ENCODE measurements at regions of chr2 and their contacts with region 1.

Region 1: DNA sequence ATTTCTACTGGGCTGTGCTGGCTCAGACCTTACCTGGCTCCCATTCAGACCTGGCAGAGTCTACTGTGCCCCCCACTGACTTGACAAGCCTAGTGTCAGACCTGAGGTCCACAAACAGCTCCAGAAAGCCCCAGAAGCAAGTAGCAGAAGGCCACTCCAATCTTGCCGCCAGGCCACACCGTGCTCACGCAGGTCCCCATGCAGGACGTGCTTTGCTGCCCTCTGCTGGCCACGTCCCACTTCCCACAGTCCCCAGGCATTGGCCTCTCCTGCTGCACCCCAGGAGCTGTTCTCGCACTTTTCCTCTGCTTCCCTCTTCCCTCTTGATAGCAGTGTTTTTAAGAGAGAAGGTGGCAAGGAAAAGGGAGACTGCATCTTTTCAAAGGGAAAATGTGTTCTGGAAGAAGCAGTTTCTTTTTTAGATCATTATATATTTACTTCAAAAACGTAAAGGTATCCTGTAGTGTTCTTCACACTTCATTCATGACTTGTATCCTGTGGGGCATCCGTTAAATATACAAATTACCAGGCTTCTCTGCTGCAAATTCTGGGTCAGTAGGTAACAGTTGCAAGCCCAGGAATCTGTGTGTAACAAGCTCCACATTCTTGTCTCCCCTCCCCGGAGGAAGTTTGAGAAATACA is 81.4 kb upstream of the PAPOLG start:
- DNase-seq: peak; percentile 81
- H3K27ac ChIP-seq: no peak overlapping the region
- CTCF ChIP-seq: peak; percentile 96

Region 2: GRCh38 chr2:60560734-60561644 is 113.7 kb before region 1 on chr2:
- CTCF ChIA-PET with region 1: interaction called, 14 read pairs
- POLR2A ChIA-PET with region 1: no interaction called
- DNase-seq: peak; percentile 20
- H3K27ac ChIP-seq: no peak overlapping the region
- CTCF ChIP-seq: peak; percentile 34

Region 3: DNA sequence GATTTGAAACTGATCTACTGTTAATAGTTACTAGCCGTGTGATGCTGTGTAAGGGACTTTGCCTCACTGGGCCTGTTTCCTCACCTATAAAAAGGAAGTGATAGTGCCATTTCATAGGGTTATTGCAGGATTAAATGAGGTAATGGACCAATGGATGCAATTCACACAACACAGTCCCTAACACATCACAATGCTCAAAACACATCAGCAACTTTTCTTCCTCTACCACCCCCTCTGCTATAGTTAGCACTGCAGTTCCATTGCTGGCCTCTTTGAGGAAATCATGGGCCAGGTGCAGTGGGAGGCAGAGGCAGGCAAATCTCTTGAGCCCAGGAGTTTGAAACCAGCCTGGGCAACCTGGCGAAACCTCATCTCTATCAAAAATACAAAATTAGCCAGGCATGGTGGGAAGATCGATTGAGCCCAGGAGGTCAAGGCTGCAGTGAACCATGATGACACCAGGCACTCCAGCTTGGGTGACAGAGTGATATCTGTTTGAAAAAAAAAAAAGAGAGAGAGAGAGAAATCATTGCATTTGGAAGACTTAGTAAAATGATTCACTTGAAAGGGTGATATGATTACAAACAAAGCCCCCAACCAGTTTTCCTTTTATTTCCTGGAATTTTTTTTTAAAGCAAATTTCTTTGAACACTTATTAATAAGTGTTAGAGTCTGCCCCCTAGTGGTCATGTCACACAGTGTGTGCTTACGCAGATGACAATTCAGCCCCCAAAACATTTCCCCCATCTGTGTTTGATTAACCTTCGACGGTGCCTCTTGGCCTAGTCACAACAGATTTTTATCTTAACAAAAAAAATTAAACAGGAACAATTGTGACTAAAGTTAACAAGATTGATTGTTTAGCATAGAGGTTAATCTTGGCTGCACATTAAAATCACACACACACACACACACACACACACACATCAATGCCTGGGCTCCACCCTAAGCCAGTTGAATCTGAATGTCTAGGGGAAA is 32.5 kb before region 1 on chr2:
- CTCF ChIA-PET with region 1: interaction called, 10 read pairs
- POLR2A ChIA-PET with region 1: no interaction called
- DNase-seq: peak; percentile 38
- H3K27ac ChIP-seq: no peak overlapping the region
- CTCF ChIP-seq: peak; percentile 77

Region 4: GRCh38 chr2:60961501-60961900 is 286.9 kb after region 1 on chr2:
- CTCF ChIA-PET with region 1: no interaction called
- POLR2A ChIA-PET with region 1: no interaction called
- DNase-seq: peak; percentile 70
- H3K27ac ChIP-seq: no peak overlapping the region
- CTCF ChIP-seq: no peak

Region 5: DNA sequence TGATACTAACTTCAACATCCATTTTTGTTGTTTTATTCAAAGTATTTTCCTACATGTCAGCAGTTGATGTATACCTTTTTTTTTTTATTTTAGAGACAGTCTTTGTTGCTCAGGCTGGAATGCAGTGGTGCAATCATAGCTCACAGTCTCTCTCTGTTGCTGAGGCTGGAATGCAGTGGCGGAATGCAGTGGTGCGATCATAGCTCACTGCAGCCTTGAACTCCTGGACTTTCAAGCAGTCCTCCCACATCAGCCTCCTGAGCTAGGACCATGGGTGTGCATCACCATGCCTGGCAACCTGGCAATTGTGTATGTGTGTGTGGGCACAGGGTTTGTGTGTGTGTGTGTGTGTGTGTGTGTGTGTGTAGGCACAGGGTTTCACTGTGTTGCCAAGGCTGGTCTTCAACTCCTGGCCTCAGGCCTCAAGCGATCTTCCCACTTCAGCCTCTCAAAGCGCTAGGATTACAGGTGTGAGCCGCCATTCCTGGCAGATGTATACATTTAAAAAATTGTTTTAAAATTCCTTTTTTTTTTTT is 415.8 kb after region 1 on chr2:
- CTCF ChIA-PET with region 1: no interaction called
- POLR2A ChIA-PET with region 1: no interaction called
- DNase-seq: no peak
- H3K27ac ChIP-seq: no peak overlapping the region
- CTCF ChIP-seq: no peak